ENCODE measurements at regions of chr16 and their contacts with region 1.

Region 1: DNA sequence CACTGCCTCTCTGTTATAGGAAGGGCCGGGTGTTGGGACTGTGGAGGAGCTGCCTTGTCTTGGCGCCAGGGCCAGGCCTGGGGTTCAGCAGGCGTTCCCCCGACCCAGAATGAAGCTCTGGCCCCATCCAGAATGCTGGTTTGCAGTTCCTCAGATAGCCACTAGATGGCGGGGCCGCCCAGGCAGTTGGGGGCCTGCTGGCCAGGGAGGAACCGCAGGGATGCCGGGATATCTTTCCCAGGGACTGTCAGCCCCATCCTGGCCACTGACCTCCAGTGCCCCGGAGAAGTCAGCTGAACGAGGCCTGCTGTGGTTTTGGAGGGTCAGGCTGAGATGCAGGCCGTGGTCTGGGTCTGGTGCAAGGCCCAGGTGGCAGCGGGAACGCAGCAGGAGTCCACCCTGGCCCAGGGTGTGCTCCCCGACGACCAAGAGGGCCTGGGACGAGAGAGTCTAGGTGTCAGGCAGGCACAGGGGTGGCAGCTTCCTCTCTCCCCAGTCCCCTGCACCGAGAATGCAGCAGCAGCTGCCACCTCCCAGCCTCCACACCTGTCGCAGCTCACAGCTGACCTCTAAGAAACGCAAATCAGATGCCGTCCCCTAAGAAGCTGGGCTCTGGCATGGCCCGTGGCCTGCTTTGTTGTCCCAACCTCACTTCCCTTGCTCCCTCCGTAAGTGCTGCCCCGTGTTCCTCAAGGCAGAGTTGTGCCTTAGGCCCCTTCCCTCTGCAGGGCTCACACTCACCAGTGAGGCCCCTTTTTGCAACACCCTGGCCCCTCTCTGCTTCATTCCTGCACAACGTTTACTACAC is 51.2 kb downstream of the RMI2 start:
- DNase-seq: no peak
- ATAC-seq: peak; percentile 94
- H3K4me3 ChIP-seq: no peak overlapping the region
- H3K27ac ChIP-seq: no peak overlapping the region
- H3K4me1 ChIP-seq: 0 out of 4 replicates have a peak, but pooled peaks cover 0 to 6% of the 10 kb centered on the region in 2 experiments
- H3K27me3 ChIP-seq: no peaks in the 10 kb centered on the region
- CTCF ChIP-seq: peak; percentile 93 to 98 (median 98)
- POLR2A ChIP-seq: no peak
- RAD21 ChIP-seq: peak; percentile 99

Region 2: DNA sequence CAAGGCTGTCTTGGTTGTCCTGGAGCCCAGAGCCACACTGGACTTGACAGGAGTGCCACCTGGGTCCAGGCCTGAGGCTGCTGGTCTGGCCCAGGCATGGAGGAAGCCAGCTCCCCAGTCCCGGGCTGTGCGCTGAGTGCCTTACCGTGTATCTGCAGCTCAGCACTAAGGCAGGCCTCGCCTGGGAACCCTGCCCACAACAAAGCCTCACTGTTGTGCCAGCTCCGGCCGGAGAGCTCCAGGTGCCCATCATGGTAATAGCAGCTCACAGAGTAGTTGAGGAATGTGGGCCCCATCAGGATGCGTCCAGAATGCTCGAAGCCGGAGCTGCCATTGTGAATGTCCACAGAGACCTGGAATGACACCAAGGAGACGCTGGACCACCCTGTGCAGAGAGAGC is 21.0 kb after region 1 on chr16:
- CTCF ChIA-PET with region 1: no interaction called
- POLR2A ChIA-PET with region 1: no interaction called
- RAD21 ChIA-PET with region 1: no interaction called
- intact Hi-C with region 1: no loop called
- DNase-seq: no peak
- ATAC-seq: no peak
- H3K4me3 ChIP-seq: no peak overlapping the region
- H3K27ac ChIP-seq: no peak overlapping the region
- H3K4me1 ChIP-seq: no peaks in the 10 kb centered on the region
- H3K27me3 ChIP-seq: no peaks in the 10 kb centered on the region
- CTCF ChIP-seq: no peak
- POLR2A ChIP-seq: no peak
- RAD21 ChIP-seq: no peak

Region 3: GRCh38 chr16:11715246-11715947 is 319.0 kb after region 1 on chr16:
- CTCF ChIA-PET with region 1: interaction called, 16 read pairs
- POLR2A ChIA-PET with region 1: no interaction called
- RAD21 ChIA-PET with region 1: interaction called in 1 of 2 experiments, 6 read pairs
- intact Hi-C with region 1: loop called (anchors 1 kb)
- DNase-seq: no peak
- ATAC-seq: no peak
- H3K4me3 ChIP-seq: no peak overlapping the region
- H3K27ac ChIP-seq: no peak overlapping the region
- H3K4me1 ChIP-seq: no peaks in the 10 kb centered on the region
- H3K27me3 ChIP-seq: no peaks in the 10 kb centered on the region
- CTCF ChIP-seq: no peak
- POLR2A ChIP-seq: no peak
- RAD21 ChIP-seq: no peak

Region 4: GRCh38 chr16:11816103-11816502 is 419.7 kb after region 1 on chr16:
- CTCF ChIA-PET with region 1: interaction called, 4 read pairs
- POLR2A ChIA-PET with region 1: no interaction called
- RAD21 ChIA-PET with region 1: interaction called in 1 of 2 experiments, 3 read pairs
- intact Hi-C with region 1: loop called (anchors 1 kb)
- DNase-seq: no peak
- ATAC-seq: no peak
- H3K4me3 ChIP-seq: no peak overlapping the region
- H3K27ac ChIP-seq: no peak overlapping the region
- H3K4me1 ChIP-seq: peaks cover 2 to 4% of the 10 kb centered on the region in 2 experiments; a peak in 1 of 4 replicates
- H3K27me3 ChIP-seq: no peaks in the 10 kb centered on the region
- CTCF ChIP-seq: no peak
- POLR2A ChIP-seq: no peak
- RAD21 ChIP-seq: no peak